CD8-positive, alpha-beta T cell (primary cell): ENCODE measurements at regions of chr18 and their contacts with region 1.

Region 1: DNA sequence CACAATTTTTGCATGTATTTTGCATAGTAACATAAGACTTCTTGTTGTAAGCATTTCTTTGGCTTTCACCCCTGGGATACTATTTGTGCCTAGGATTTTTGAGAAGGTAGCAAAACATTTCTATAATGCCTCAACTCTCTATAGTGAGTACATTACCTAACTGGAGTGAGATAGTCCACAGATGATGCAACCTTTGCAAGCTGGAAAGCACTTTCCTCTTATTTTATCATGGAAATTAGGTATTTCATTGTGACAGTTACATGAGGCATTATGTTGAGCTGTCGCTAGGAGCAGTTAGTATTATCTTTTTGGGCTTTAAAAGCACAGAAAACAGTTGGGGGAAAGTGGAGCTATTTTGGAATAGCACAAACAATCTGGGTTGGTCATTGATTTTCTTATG is 786.2 kb downstream of the DCC start:
- DNase-seq: no peak
- ATAC-seq: no peak
- H3K4me3 ChIP-seq: no peak overlapping the region
- H3K4me3 Mint-ChIP-seq: no peak overlapping the region
- H3K27ac ChIP-seq: no peak overlapping the region
- H3K27ac Mint-ChIP-seq: no peak overlapping the region
- H3K4me1 ChIP-seq: no peaks in the 10 kb centered on the region
- H3K4me1 Mint-ChIP-seq: no peaks in the 10 kb centered on the region
- H3K27me3 ChIP-seq: no peaks in the 10 kb centered on the region
- H3K27me3 Mint-ChIP-seq: no peaks in the 10 kb centered on the region
- CTCF ChIP-seq: no peak

Region 2: GRCh38 chr18:53056064-53056463 is 70.1 kb before region 1 on chr18:
- CTCF ChIA-PET with region 1: no interaction called
- POLR2A ChIA-PET with region 1: no interaction called
- intact Hi-C with region 1: no loop called
- DNase-seq: no peak
- ATAC-seq: no peak
- H3K4me3 ChIP-seq: no peak overlapping the region
- H3K4me3 Mint-ChIP-seq: no peak overlapping the region
- H3K27ac ChIP-seq: no peak overlapping the region
- H3K27ac Mint-ChIP-seq: no peak overlapping the region
- H3K4me1 ChIP-seq: no peaks in the 10 kb centered on the region
- H3K4me1 Mint-ChIP-seq: no peaks in the 10 kb centered on the region
- H3K27me3 ChIP-seq: no peaks in the 10 kb centered on the region
- H3K27me3 Mint-ChIP-seq: no peaks in the 10 kb centered on the region
- CTCF ChIP-seq: no peak

Region 3: GRCh38 chr18:53191634-53192033 is 65.4 kb after region 1 on chr18:
- CTCF ChIA-PET with region 1: no interaction called
- POLR2A ChIA-PET with region 1: no interaction called
- intact Hi-C with region 1: loop called in 1 of 2 experiments (anchors 10 kb)
- DNase-seq: no peak
- ATAC-seq: no peak
- H3K4me3 ChIP-seq: no peak overlapping the region
- H3K4me3 Mint-ChIP-seq: no peak overlapping the region
- H3K27ac ChIP-seq: no peak overlapping the region
- H3K27ac Mint-ChIP-seq: no peak overlapping the region
- H3K4me1 ChIP-seq: no peaks in the 10 kb centered on the region
- H3K4me1 Mint-ChIP-seq: no peaks in the 10 kb centered on the region
- H3K27me3 ChIP-seq: no peaks in the 10 kb centered on the region
- H3K27me3 Mint-ChIP-seq: no peaks in the 10 kb centered on the region
- CTCF ChIP-seq: no peak